ENCODE measurements at regions of chr1 and their contacts with region 1.

Region 1: DNA sequence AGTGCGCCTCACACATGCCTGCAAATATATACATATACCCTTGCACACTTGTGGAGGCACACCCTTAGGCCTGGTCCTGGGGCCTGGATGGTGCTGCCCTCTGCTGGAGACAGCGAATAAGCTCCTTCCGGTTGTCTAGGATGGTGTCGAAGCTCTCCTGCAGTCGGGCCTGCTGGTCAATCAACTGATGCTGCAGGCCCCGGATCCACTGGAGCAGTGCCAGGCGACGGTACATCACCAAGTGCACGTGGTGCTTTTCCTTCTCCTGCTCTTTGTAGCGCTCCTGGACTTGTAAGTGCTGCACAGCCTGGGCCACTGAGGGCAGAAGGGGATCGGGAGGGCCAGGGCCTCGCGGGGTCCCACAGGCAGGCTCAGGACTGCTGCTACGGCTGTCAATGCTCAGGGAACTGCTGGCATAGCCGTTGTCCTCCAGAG is 3.1 kb downstream of the C1orf216 start:
- DNase-seq: peak; percentile 67 to 75 (median 71)
- H3K4me3 ChIP-seq: no peak overlapping the region
- H3K4me3 Mint-ChIP-seq: peak overlapping the region in 7 of 8 donors; percentile 9 to 88 (median 72)
- H3K27ac ChIP-seq: no peak overlapping the region
- H3K27ac Mint-ChIP-seq: peak overlapping the region; percentile 2 to 88 (median 36)
- H3K4me1 ChIP-seq: peaks cover 33% of the 10 kb centered on the region
- H3K4me1 Mint-ChIP-seq: peaks cover 29 to 43% (median 33%) of the 10 kb centered on the region in 4 donors
- H3K27me3 ChIP-seq: no peaks in the 10 kb centered on the region
- H3K27me3 Mint-ChIP-seq: no peaks in the 10 kb centered on the region

Region 2: DNA sequence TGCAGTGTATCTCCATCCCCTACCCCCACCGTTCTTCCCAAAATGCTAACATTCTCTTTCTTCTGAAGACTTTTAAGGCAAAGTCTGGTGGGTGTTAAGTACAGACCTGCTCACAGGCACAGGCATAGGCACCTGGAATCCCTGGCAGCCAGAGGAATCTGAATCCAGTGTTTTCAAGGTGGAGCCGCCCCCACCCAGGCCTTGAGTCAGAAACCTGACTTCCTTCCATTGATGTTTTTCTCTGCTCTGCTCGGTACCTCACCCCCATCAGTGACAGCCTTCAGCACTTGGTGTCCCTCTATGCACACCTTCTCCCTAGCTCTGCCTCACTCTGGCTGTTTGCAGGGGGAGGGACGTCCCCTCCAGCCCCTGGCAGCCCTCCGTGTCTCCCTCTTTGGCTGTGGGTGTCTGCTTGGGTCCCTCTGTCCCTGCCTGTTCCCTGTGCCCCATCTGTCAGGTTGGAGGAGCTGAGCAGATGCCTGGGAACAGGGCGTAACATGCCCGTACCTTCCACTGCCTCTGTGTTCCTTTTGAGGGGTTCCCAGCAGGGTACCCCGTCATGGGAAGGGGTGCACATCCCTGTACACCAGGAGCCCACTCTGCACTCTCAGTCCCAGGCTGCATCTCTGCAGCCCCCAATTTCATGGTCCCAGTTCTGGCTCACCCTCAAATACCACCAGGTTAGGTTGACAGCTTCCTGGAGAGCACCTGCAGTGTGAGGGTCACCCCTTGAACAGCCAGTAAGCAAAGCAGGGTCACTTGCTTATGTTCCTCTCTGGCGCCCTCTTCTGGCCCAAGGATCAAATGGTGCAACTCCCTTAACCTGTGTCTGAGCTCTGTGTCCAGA is 151.3 kb before region 1 on chr1:
- CTCF ChIA-PET with region 1: interaction called, 103 read pairs
- POLR2A ChIA-PET with region 1: interaction called, 14 read pairs
- intact Hi-C with region 1: loop called (anchors 1 kb)
- DNase-seq: peak; percentile 70 to 78 (median 74)
- H3K4me3 ChIP-seq: no peak overlapping the region
- H3K4me3 Mint-ChIP-seq: peak overlapping the region in 1 of 8 donors; percentile 0
- H3K27ac ChIP-seq: no peak overlapping the region
- H3K27ac Mint-ChIP-seq: peak overlapping the region; percentile 68 to 93 (median 70)
- H3K4me1 ChIP-seq: peaks cover 3% of the 10 kb centered on the region
- H3K4me1 Mint-ChIP-seq: peaks cover 17 to 41% (median 24%) of the 10 kb centered on the region in 4 donors
- H3K27me3 ChIP-seq: no peaks in the 10 kb centered on the region
- H3K27me3 Mint-ChIP-seq: no peaks in the 10 kb centered on the region

Region 3: GRCh38 chr1:35641233-35641866 is 74.2 kb before region 1 on chr1 and contains the start of gene PSMB2:
- CTCF ChIA-PET with region 1: interaction called, 9 read pairs
- POLR2A ChIA-PET with region 1: no interaction called
- intact Hi-C with region 1: loop called (anchors 1 kb)
- DNase-seq: peak; percentile 94 to 95 (median 94)
- H3K4me3 ChIP-seq: peak within 1 kb of the TSS; percentile 94 to 98
- H3K4me3 Mint-ChIP-seq: peak within 1 kb of the TSS; percentile 98 to 100 (median 99)
- H3K27ac ChIP-seq: peak within 1 kb of the TSS; percentile 81
- H3K27ac Mint-ChIP-seq: peak within 1 kb of the TSS; percentile 98 to 100 (median 99)
- H3K4me1 ChIP-seq: peaks cover 47% of the 10 kb centered on the region
- H3K4me1 Mint-ChIP-seq: peaks cover 26 to 44% (median 36%) of the 10 kb centered on the region in 4 donors
- H3K27me3 ChIP-seq: peaks cover 5% of the 10 kb centered on the region
- H3K27me3 Mint-ChIP-seq: peaks cover 9 to 23% of the 10 kb centered on the region in 2 donors
- total RNA-seq, gene PSMB2: 25.5 to 28.2 TPM

Region 4: DNA sequence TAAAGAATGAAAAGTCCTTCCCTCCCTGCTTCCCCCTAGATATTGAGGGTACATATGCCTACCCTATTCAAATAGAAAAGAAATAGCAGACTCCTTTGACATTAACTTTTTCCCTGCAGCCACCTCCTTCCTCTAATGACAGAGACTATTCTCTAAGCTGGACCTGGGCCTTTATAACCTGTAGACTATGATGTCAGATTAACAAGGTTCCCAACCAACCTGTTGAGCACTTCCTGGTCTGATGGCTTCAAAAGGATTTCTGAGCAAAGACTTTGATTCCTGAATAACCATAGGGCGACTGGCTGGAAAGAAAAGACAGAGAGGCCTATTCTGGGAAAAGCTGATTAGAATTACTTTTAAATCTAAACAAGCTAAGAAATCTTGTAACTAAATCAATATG is 21.5 kb after region 1 on chr1:
- CTCF ChIA-PET with region 1: interaction called, 28 read pairs
- POLR2A ChIA-PET with region 1: no interaction called
- intact Hi-C with region 1: no loop called
- DNase-seq: no peak
- H3K4me3 ChIP-seq: no peak overlapping the region
- H3K4me3 Mint-ChIP-seq: no peak overlapping the region
- H3K27ac ChIP-seq: no peak overlapping the region
- H3K27ac Mint-ChIP-seq: peak overlapping the region in 3 of 7 donors; percentile 18 to 42 (median 36)
- H3K4me1 ChIP-seq: no peaks in the 10 kb centered on the region
- H3K4me1 Mint-ChIP-seq: no peaks in the 10 kb centered on the region
- H3K27me3 ChIP-seq: no peaks in the 10 kb centered on the region
- H3K27me3 Mint-ChIP-seq: no peaks in the 10 kb centered on the region

Region 5: DNA sequence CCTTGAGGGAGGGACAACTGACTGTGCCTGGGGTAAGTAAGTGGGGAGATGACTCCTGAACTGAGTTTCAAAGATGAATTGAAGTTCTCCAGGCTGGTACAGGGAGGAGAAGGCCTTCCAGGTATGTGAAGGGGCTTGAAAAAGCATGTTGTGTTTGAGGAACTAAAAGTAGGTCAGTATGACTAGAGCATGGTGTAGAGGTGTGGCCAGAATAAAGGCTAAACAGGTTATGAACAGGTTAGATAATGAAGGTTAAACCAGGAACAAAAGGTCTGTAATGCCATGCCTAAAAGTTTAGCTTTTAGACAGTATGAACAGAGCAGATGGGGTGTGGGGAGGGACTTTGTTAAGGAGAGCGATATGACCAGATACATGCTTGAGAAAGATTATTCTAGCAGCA is 61.5 kb after region 1 on chr1:
- CTCF ChIA-PET with region 1: interaction called, 5 read pairs
- POLR2A ChIA-PET with region 1: no interaction called
- intact Hi-C with region 1: loop called (anchors 2 kb)
- DNase-seq: peak in 2 of 5 donors; percentile 6 to 8
- H3K4me3 ChIP-seq: no peak overlapping the region
- H3K4me3 Mint-ChIP-seq: peak overlapping the region in 5 of 8 donors; percentile 2 to 26 (median 15)
- H3K27ac ChIP-seq: no peak overlapping the region
- H3K27ac Mint-ChIP-seq: peak overlapping the region; percentile 27 to 88 (median 81)
- H3K4me1 ChIP-seq: peaks cover 24% of the 10 kb centered on the region
- H3K4me1 Mint-ChIP-seq: peaks cover 11 to 32% (median 15%) of the 10 kb centered on the region in 4 donors
- H3K27me3 ChIP-seq: no peaks in the 10 kb centered on the region
- H3K27me3 Mint-ChIP-seq: no peaks in the 10 kb centered on the region